ENCODE measurements at regions of chr22 and their contacts with region 1.

Region 1: DNA sequence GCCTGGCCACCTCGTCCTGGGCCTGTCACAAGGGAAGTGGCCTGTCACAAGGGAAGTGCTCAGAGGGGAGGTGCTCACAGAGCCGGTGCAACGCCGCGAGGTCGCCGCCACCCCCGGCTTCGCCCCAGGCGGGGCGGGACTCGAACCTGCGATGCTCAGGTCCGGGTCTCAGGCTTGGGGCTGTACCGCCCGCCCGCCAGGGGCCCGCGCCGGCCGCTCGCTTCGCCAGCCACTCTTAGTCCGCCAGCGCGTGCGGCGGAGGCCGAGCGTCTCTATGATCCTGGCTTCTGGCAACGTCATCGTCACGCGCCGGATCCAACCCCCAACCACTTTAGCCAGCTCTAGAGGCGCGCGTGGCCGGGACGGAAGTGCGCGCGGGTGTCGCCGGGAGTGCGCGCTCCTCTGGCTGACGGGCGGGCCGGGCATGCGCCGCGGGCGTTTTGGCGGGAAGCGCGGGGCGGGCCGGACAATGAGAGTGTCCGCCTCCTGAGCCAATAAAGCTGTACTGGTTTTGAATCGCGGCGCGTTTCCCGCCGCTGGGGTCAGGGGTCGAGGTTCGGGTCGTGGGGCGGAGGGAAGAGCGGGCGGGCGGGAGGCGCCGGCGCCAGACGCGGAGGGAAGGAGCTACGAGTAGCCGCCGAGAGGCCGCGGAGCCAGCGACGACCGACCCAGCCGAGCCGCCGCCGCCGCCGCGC is at the start of gene TRMT2A:
- DNase-seq: peak; percentile 99
- ATAC-seq: peak; percentile 79
- H3K4me3 Mint-ChIP-seq: peak within 1 kb of the TSS; percentile 94
- H3K27ac Mint-ChIP-seq: peak within 1 kb of the TSS; percentile 91
- H3K4me1 Mint-ChIP-seq: peaks cover 47% of the 10 kb centered on the region
- H3K27me3 Mint-ChIP-seq: no peaks in the 10 kb centered on the region
- total RNA-seq, gene TRMT2A: 84.4 to 85.9 TPM

Region 2: DNA sequence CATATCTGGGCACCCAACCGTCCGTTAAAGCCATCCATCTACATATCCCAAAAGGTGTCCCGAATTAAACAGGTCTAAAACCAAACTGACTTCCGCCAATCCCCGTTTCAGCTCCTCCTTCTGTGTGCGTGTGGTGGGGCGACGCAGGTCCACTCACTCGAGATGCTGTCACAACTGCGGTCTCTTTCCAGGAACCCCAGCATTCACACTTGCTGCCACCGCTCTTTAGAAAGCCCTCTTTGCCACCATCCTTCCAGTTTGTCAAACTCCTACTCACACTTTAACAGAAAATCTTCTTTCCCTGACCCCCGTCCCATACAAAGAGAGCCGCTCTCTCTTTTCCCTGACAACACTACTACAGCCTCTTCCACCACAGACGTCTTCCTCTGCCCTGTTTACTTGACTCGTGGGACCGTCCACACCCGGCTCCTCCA is 973.1 kb before region 1 on chr22:
- CTCF ChIA-PET with region 1: no interaction called
- POLR2A ChIA-PET with region 1: no interaction called
- intact Hi-C with region 1: loop called in 1 of 2 experiments (anchors 5 kb)
- DNase-seq: peak; percentile 69
- ATAC-seq: peak; percentile 37
- H3K4me3 Mint-ChIP-seq: peak overlapping the region; percentile 95
- H3K27ac Mint-ChIP-seq: peak overlapping the region; percentile 96
- H3K4me1 Mint-ChIP-seq: peaks cover 18% of the 10 kb centered on the region
- H3K27me3 Mint-ChIP-seq: peaks cover 5% of the 10 kb centered on the region

Region 3: GRCh38 chr22:19854778-19855503 is 262.2 kb before region 1 on chr22 and contains the starts of genes GNB1L and RTL10:
- CTCF ChIA-PET with region 1: no interaction called
- POLR2A ChIA-PET with region 1: no interaction called
- intact Hi-C with region 1: loop called in 1 of 2 experiments (anchors 1 kb)
- DNase-seq: peak; percentile 98
- ATAC-seq: peak; percentile 93
- H3K4me3 Mint-ChIP-seq: peak within 1 kb of the TSS; percentile 89
- H3K27ac Mint-ChIP-seq: peak within 1 kb of the TSS; percentile 97
- H3K4me1 Mint-ChIP-seq: peaks cover 51% of the 10 kb centered on the region
- H3K27me3 Mint-ChIP-seq: no peaks in the 10 kb centered on the region
- total RNA-seq, gene GNB1L: 7.6 to 12.4 TPM
- total RNA-seq, gene RTL10: 14.9 to 15.6 TPM

Region 4: GRCh38 chr22:19962233-19962908 is 154.7 kb before region 1 on chr22:
- CTCF ChIA-PET with region 1: no interaction called
- POLR2A ChIA-PET with region 1: no interaction called
- intact Hi-C with region 1: loop called in 1 of 2 experiments (anchors 5 kb)
- DNase-seq: peak; percentile 87
- ATAC-seq: peak; percentile 82
- H3K4me3 Mint-ChIP-seq: no peak overlapping the region
- H3K27ac Mint-ChIP-seq: no peak overlapping the region
- H3K4me1 Mint-ChIP-seq: peaks cover 7% of the 10 kb centered on the region
- H3K27me3 Mint-ChIP-seq: no peaks in the 10 kb centered on the region

Region 5: DNA sequence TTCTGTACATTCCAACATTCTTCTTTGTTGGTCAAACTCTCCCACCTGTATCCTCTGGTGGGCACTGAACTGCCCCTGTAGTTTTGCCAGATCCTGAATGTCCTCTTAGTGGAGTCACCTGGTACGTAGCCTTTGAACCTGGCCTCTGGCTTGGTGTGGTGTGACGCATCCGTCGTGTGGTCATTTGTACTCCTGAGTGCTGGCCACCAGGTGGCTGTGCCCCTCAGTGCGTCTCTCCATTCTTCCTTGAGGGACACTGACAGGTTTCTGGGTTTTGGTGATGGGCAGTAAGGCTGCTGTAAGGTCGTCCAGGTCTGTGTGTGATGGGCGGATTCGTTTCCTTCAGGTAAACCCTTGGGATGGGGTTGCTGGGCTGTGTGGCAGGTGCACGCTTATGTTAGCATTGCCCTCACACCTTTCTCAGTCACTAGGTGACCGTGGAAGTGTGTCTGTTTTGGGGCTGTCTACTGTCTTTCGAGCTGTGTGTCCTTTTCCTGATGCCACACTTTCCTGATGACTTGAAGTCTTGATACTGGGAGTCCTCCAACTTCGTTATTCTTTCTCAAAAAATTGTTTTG is 14.8 kb before region 1 on chr22:
- CTCF ChIA-PET with region 1: interaction called, 16 read pairs
- POLR2A ChIA-PET with region 1: interaction called, 3 read pairs
- intact Hi-C with region 1: loop called (anchors 1 kb)
- DNase-seq: no peak
- ATAC-seq: no peak
- H3K4me3 Mint-ChIP-seq: no peak overlapping the region
- H3K27ac Mint-ChIP-seq: peak overlapping the region; percentile 83
- H3K4me1 Mint-ChIP-seq: peaks cover 49% of the 10 kb centered on the region
- H3K27me3 Mint-ChIP-seq: no peaks in the 10 kb centered on the region

Region 6: DNA sequence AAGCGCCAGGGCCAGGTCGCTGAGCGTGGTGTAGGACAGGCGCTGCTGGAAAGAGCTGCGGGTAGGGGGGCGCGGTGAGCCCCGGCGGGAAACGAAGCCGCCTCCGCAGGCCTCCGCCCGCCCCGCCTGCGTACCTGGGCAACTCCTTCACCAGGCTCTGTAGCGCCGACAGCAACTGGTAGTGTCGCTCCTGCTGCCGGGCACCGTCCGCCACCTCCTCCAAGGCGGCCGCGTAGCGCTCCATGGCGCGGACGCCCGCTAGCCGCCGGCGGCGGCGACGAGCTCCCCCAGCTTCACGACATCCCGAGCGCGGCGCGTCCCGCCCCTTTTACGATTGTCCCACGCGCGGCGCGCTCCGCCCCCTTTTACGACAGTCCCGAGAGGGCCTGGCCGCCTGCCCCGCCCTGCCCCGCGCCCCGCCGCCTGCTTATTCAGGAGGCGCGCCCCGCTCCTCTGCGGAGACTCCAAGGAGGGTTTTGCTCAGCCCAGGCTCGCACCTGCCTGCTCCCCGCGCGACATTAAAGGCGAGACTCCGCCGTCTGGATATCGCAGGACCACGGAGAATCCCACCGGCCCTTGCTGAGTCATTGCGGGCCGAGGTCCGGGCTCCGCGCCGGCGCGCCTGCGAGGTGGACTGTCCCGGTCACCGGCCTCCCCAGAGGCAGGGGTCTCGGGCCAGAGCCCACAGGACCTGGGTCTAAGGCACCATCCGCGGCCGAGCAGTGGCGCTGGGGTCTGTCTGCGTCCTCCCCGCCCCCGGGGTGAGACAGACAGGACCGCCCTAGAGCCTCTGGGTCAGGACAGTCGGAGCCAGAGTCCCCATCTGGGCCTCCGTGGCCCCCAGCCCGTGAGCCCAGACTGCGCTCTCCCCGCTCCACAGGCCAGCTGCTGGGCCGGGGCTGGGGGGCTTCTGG is 202.9 kb after region 1 on chr22 and contains the start of gene DGCR6L:
- CTCF ChIA-PET with region 1: no interaction called
- POLR2A ChIA-PET with region 1: interaction called, 4 read pairs
- intact Hi-C with region 1: loop called in 1 of 2 experiments (anchors 1 kb)
- DNase-seq: peak; percentile 99
- ATAC-seq: peak; percentile 53
- H3K4me3 Mint-ChIP-seq: peak within 1 kb of the TSS; percentile 85
- H3K27ac Mint-ChIP-seq: peak within 1 kb of the TSS; percentile 79
- H3K4me1 Mint-ChIP-seq: peaks cover 55% of the 10 kb centered on the region
- H3K27me3 Mint-ChIP-seq: no peaks in the 10 kb centered on the region
- total RNA-seq, gene DGCR6L: 22.4 to 24.8 TPM

Region 7: GRCh38 chr22:20858615-20859416 is 741.7 kb after region 1 on chr22 and contains the starts of genes PI4KA and SNAP29:
- CTCF ChIA-PET with region 1: no interaction called
- POLR2A ChIA-PET with region 1: no interaction called
- intact Hi-C with region 1: loop called in 1 of 2 experiments (anchors 2 kb)
- DNase-seq: peak; percentile 99
- ATAC-seq: peak; percentile 95
- H3K4me3 Mint-ChIP-seq: peak within 1 kb of the TSS; percentile 87
- H3K27ac Mint-ChIP-seq: peak within 1 kb of the TSS; percentile 79
- H3K4me1 Mint-ChIP-seq: peaks cover 46% of the 10 kb centered on the region
- H3K27me3 Mint-ChIP-seq: no peaks in the 10 kb centered on the region
- total RNA-seq, gene PI4KA: 52.8 TPM
- total RNA-seq, gene SNAP29: 22.8 to 33.8 TPM

Measured in activated CD4-positive, alpha-beta T cell treated with anti-CD3 and anti-CD28 coated beads for 36 hours (primary cell).